ENCODE measurements at regions of chr12 and their contacts with region 1.

Region 1: DNA sequence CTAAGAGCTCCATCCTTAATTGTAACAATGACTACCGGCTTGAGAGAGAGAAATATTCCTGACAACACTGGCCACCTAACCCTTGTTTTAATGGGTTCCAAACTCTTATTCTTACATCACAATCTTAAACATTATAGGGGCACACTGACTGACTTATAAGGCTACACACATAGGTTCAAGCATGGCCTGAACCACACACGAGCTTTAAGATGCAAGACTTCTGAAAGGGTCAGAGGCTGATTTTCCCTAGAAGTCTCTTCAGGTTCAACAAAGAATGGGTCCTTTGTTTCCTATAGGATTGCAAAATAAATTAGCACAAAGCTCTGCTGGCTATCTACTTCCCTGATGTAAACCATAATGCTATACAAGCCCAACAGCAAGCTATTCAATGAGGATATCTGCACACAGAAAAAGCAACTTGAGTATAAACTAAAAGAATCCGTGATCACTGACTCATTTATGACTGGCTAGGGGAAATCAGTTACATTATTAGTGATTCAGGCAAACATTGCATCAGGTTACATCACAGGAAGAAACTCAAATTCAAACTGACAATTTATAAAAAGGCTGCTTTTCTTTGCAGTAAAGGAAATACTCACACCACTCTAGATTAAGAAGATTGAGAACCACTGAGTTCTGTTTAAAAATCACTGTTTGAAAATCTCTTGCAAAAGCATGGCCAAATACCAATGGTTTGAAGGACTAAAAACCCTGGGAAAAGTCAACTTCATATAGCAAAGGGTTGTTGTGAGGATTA is 8.5 kb downstream of the BTG1 start:
- DNase-seq: peak in 2 of 9 donors; percentile 34 to 40
- ATAC-seq: peak; percentile 12
- H3K4me3 ChIP-seq: peak overlapping the region; percentile 98
- H3K4me3 Mint-ChIP-seq: peak overlapping the region; percentile 94 to 100 (median 98)
- H3K27ac ChIP-seq: peak overlapping the region; percentile 91
- H3K27ac Mint-ChIP-seq: peak overlapping the region; percentile 91 to 100 (median 98)
- H3K4me1 ChIP-seq: peaks cover 34 to 39% of the 10 kb centered on the region in 2 donors
- H3K4me1 Mint-ChIP-seq: peaks cover 46 to 74% (median 51%) of the 10 kb centered on the region in 7 donors
- H3K27me3 ChIP-seq: no peaks in the 10 kb centered on the region
- H3K27me3 Mint-ChIP-seq: no peaks in the 10 kb centered on the region

Region 2: DNA sequence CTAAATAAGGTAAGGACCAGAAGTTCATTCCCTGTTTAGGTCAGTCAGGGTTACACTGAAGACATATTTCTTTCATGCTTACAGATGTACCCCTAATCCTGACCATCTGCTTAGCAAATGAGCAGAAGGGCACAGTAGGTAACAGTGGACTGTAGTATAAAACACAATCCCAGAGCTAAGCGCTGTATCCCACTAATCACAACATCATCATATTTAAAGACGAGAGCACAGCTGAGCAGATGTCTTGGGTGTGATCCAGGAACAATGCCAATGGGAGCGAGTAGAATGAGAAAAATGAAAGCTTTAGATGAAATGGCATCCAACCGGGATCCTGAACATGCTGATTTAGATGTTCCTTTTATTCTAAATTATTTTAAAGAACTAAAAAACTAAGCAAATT is 1395.5 kb before region 1 on chr12:
- CTCF ChIA-PET with region 1: no interaction called
- POLR2A ChIA-PET with region 1: no interaction called
- intact Hi-C with region 1: no loop called
- DNase-seq: no peak
- ATAC-seq: no peak
- H3K4me3 ChIP-seq: no peak overlapping the region
- H3K4me3 Mint-ChIP-seq: no peak overlapping the region
- H3K27ac ChIP-seq: no peak overlapping the region
- H3K27ac Mint-ChIP-seq: no peak overlapping the region
- H3K4me1 ChIP-seq: no peaks in the 10 kb centered on the region
- H3K4me1 Mint-ChIP-seq: no peaks in the 10 kb centered on the region
- H3K27me3 ChIP-seq: no peaks in the 10 kb centered on the region
- H3K27me3 Mint-ChIP-seq: no peaks in the 10 kb centered on the region

Region 3: DNA sequence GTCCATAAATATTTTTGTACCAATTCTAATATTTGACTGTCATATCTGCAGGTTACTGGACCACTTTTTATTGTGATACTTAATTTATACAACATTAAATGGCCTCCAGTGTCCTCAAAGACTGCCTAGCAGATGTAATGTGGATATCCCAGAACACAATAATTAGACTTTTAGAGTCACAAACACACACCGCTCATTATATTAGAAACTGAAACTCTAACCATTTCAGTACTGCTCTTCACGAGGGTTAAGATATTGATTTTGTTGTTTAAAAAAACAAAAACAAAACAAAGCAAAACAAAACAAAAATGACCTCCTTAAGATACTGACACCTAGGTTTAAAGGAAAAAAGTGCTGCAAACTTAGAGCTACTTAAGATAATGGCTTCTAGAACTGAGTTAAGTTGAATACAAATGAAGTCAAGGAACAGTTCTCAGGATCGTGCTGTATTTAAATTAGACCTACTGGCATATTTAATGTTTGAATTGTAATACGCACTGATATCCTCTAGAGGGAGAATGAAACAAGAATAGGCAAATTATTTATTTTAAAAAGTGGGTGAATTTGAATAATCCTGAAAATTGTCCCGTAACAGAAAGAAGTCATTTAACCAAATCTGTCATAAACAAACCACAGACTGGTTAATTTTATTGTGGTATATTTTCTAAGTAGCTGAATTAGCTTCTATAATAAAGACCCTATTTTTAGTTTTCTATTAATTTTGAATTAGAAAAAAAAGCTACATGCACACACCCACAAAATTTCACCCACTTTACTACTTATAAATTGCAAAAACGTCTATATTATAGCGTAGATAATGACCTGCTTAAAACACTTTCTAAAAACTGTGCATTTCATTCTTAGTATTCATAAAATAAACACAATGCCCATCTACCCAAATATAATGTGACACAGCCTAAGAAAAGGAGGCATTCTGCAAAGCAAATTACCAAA is 559.3 kb before region 1 on chr12:
- CTCF ChIA-PET with region 1: interaction called, 6 read pairs
- POLR2A ChIA-PET with region 1: no interaction called
- intact Hi-C with region 1: loop called (anchors 1 to 2 kb)
- DNase-seq: peak in 6 of 9 donors; percentile 30 to 53 (median 39)
- ATAC-seq: peak; percentile 88
- H3K4me3 ChIP-seq: peak overlapping the region; percentile 39
- H3K4me3 Mint-ChIP-seq: peak overlapping the region; percentile 16 to 93 (median 84)
- H3K27ac ChIP-seq: no peak overlapping the region
- H3K27ac Mint-ChIP-seq: peak overlapping the region; percentile 14 to 94 (median 81)
- H3K4me1 ChIP-seq: peaks cover 0 to 5% of the 10 kb centered on the region in 2 donors
- H3K4me1 Mint-ChIP-seq: peaks cover 12 to 36% (median 19%) of the 10 kb centered on the region in 7 donors
- H3K27me3 ChIP-seq: no peaks in the 10 kb centered on the region
- H3K27me3 Mint-ChIP-seq: peaks cover 0 to 3% (median 0%) of the 10 kb centered on the region in 5 donors

Region 4: GRCh38 chr12:91991399-91992187 is 145.6 kb before region 1 on chr12:
- CTCF ChIA-PET with region 1: interaction called, 4 read pairs
- POLR2A ChIA-PET with region 1: interaction called, 225 read pairs
- intact Hi-C with region 1: loop called in 1 of 2 experiments (anchors 2 kb)
- DNase-seq: peak in 5 of 9 donors; percentile 22 to 64 (median 48)
- ATAC-seq: peak; percentile 83
- H3K4me3 ChIP-seq: no peak overlapping the region
- H3K4me3 Mint-ChIP-seq: peak overlapping the region in 5 of 10 donors; percentile 18 to 50 (median 32)
- H3K27ac ChIP-seq: peak overlapping the region; percentile 26
- H3K27ac Mint-ChIP-seq: peak overlapping the region in 7 of 9 donors; percentile 8 to 92 (median 70)
- H3K4me1 ChIP-seq: peaks cover 9 to 27% of the 10 kb centered on the region in 2 donors
- H3K4me1 Mint-ChIP-seq: peaks cover 9 to 92% (median 79%) of the 10 kb centered on the region in 7 donors
- H3K27me3 ChIP-seq: no peaks in the 10 kb centered on the region
- H3K27me3 Mint-ChIP-seq: no peaks in the 10 kb centered on the region

Region 5: DNA sequence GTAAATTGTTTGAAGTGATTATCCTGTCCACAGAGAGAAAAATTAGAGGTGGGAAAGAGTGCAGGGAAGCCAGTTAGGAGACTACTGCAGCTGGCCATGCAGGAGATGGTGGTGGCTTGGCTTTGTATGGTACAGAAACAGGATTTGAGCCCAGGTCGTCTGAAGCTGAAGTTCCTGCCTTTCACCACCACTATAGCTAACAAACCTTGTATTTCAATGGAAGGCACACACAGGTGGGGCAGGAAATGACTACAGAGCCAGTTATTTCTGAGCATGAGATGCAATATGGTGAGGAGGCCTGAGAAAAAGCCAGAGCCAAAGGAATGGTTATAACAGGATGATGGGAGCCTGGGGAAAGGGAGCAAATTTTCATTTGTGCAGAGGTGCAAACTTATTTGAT is 95.4 kb before region 1 on chr12:
- CTCF ChIA-PET with region 1: interaction called, 5 read pairs
- POLR2A ChIA-PET with region 1: interaction called, 377 read pairs
- intact Hi-C with region 1: no loop called
- DNase-seq: peak in 7 of 9 donors; percentile 44 to 71 (median 60)
- ATAC-seq: peak; percentile 84
- H3K4me3 ChIP-seq: no peak overlapping the region
- H3K4me3 Mint-ChIP-seq: peak overlapping the region; percentile 41 to 78 (median 62)
- H3K27ac ChIP-seq: peak overlapping the region; percentile 12
- H3K27ac Mint-ChIP-seq: peak overlapping the region; percentile 70 to 99 (median 89)
- H3K4me1 ChIP-seq: peaks cover 20 to 60% of the 10 kb centered on the region in 2 donors
- H3K4me1 Mint-ChIP-seq: peaks cover 41 to 93% (median 88%) of the 10 kb centered on the region in 7 donors
- H3K27me3 ChIP-seq: no peaks in the 10 kb centered on the region
- H3K27me3 Mint-ChIP-seq: no peaks in the 10 kb centered on the region

Region 6: DNA sequence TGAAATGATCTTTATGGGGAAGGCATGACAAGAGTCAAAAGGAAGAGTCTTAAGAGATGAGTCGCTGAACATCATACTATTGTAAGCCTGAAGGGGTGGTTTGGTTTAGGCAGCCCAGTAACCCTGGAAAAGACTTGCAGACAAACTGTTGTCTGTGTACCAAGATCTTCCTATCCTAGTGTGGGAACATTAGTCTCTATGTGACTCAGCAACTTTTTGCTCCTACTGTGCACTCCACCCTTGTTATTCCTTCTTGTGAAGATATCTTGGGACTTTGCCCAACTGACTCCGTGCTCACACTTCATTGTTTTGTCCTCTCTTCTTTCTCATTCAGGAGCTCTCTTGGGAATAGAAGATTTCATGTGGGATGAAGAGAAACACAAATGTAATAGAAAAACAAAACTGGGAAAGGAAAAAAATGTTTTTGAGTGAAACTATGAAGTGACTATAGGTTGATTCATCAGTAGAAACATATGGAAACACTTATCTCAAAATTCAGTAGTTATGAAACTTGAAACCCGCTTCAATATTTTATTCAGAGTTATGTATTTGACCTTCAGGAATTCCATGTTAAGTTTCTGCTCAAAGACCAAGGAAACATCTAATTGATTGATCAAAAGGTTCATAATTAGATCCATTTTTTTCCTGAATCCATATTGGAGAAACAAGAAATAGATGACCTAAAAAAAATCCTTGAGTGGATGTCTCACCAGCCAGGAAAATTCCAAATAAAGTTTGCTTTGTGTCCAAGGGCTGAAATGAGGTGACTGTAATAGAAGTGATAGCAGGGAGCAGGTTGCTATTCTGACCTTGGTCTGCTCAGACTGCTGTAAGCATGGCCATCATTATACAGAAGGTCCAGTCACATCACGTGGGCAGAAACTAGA is 58.7 kb before region 1 on chr12:
- CTCF ChIA-PET with region 1: interaction called, 3 read pairs
- POLR2A ChIA-PET with region 1: interaction called, 10 read pairs
- intact Hi-C with region 1: loop called in 1 of 2 experiments (anchors 2 kb)
- DNase-seq: no peak
- ATAC-seq: peak; percentile 31
- H3K4me3 ChIP-seq: no peak overlapping the region
- H3K4me3 Mint-ChIP-seq: peak overlapping the region in 7 of 10 donors; percentile 12 to 88 (median 51)
- H3K27ac ChIP-seq: peak overlapping the region; percentile 5
- H3K27ac Mint-ChIP-seq: peak overlapping the region in 8 of 9 donors; percentile 83 to 96 (median 90)
- H3K4me1 ChIP-seq: peaks cover 10 to 45% of the 10 kb centered on the region in 2 donors
- H3K4me1 Mint-ChIP-seq: peaks cover 37 to 87% (median 79%) of the 10 kb centered on the region in 7 donors
- H3K27me3 ChIP-seq: no peaks in the 10 kb centered on the region
- H3K27me3 Mint-ChIP-seq: no peaks in the 10 kb centered on the region

Region 7: GRCh38 chr12:92123780-92124688 is 13.1 kb before region 1 on chr12:
- CTCF ChIA-PET with region 1: interaction called, 3 read pairs
- POLR2A ChIA-PET with region 1: interaction called, 267 read pairs
- intact Hi-C with region 1: loop called in 1 of 2 experiments (anchors 1 kb)
- DNase-seq: no peak
- ATAC-seq: peak; percentile 44
- H3K4me3 ChIP-seq: peak overlapping the region; percentile 14
- H3K4me3 Mint-ChIP-seq: peak overlapping the region; percentile 27 to 94 (median 68)
- H3K27ac ChIP-seq: no peak overlapping the region
- H3K27ac Mint-ChIP-seq: peak overlapping the region; percentile 24 to 82 (median 65)
- H3K4me1 ChIP-seq: peaks cover 3 to 47% of the 10 kb centered on the region in 2 donors
- H3K4me1 Mint-ChIP-seq: peaks cover 47 to 76% (median 72%) of the 10 kb centered on the region in 7 donors
- H3K27me3 ChIP-seq: no peaks in the 10 kb centered on the region
- H3K27me3 Mint-ChIP-seq: no peaks in the 10 kb centered on the region

Region 8: GRCh38 chr12:92769124-92769901 is 632.2 kb after region 1 on chr12:
- CTCF ChIA-PET with region 1: no interaction called
- POLR2A ChIA-PET with region 1: no interaction called
- intact Hi-C with region 1: no loop called
- DNase-seq: peak in 4 of 9 donors; percentile 3 to 13 (median 6)
- ATAC-seq: peak; percentile 36
- H3K4me3 ChIP-seq: no peak overlapping the region
- H3K4me3 Mint-ChIP-seq: peak overlapping the region in 8 of 10 donors; percentile 1 to 61 (median 36)
- H3K27ac ChIP-seq: no peak overlapping the region
- H3K27ac Mint-ChIP-seq: peak overlapping the region in 6 of 9 donors; percentile 2 to 72 (median 20)
- H3K4me1 ChIP-seq: peaks cover 0 to 11% of the 10 kb centered on the region in 2 donors
- H3K4me1 Mint-ChIP-seq: peaks cover 14 to 49% (median 34%) of the 10 kb centered on the region in 7 donors
- H3K27me3 ChIP-seq: no peaks in the 10 kb centered on the region
- H3K27me3 Mint-ChIP-seq: no peaks in the 10 kb centered on the region

Measured in naive thymus-derived CD4-positive, alpha-beta T cell (primary cell).